HepG2 (cell line): ENCODE measurements at regions of chr20 and their contacts with region 1.

Region 1: GRCh38 chr20:35092524-35093266 is at the start of gene TRPC4AP:
- DNase-seq: peak; percentile 92
- ATAC-seq: peak; percentile 92
- H3K4me3 ChIP-seq: peak within 1 kb of the TSS; percentile 82 to 99 (median 82)
- H3K27ac ChIP-seq: peak within 1 kb of the TSS; percentile 82
- H3K4me1 ChIP-seq: peaks cover 61% of the 10 kb centered on the region
- H3K27me3 ChIP-seq: peaks cover 0 to 4% of the 10 kb centered on the region in 2 experiments; a peak in 1 of 5 replicates
- CTCF ChIP-seq: peak; percentile 99
- EP300 ChIP-seq: peak in 1 of 2 experiments; percentile 66; a peak in 3 of 4 replicates
- POLR2A ChIP-seq: peak; percentile 82 to 85
- RAD21 ChIP-seq: peak; percentile 77
- total RNA-seq, gene TRPC4AP: 136 and 161 TPM in 2 replicates

Region 2: GRCh38 chr20:35008411-35009342 is 84.0 kb before region 1 on chr20:
- CTCF ChIA-PET with region 1: no interaction called
- POLR2A ChIA-PET with region 1: no interaction called
- in situ Hi-C with region 1: no loop called
- intact Hi-C with region 1: no loop called
- DNase-seq: no peak
- ATAC-seq: no peak
- H3K4me3 ChIP-seq: no peak overlapping the region
- H3K27ac ChIP-seq: no peak overlapping the region
- H3K4me1 ChIP-seq: no peaks in the 10 kb centered on the region
- H3K27me3 ChIP-seq: no peaks in the 10 kb centered on the region
- CTCF ChIP-seq: no peak
- EP300 ChIP-seq: no peak
- POLR2A ChIP-seq: no peak
- RAD21 ChIP-seq: no peak

Region 3: GRCh38 chr20:35207950-35208611 is 115.4 kb after region 1 on chr20:
- CTCF ChIA-PET with region 1: interaction called, 58 read pairs
- POLR2A ChIA-PET with region 1: interaction called, 5 read pairs
- in situ Hi-C with region 1: no loop called
- intact Hi-C with region 1: loop called (anchors 1 kb)
- DNase-seq: peak; percentile 89
- ATAC-seq: peak; percentile 98
- H3K4me3 ChIP-seq: peak overlapping the region in 2 of 3 experiments; percentile 23 to 40; a peak in 4 of 6 replicates
- H3K27ac ChIP-seq: peak overlapping the region; percentile 46
- H3K4me1 ChIP-seq: peaks cover 18% of the 10 kb centered on the region
- H3K27me3 ChIP-seq: no peaks in the 10 kb centered on the region
- CTCF ChIP-seq: peak; percentile 97
- EP300 ChIP-seq: peak in 1 of 2 experiments; percentile 58; a peak in 1 of 4 replicates
- POLR2A ChIP-seq: no peak
- RAD21 ChIP-seq: peak; percentile 97

Region 4: GRCh38 chr20:35284267-35284991 is 191.7 kb after region 1 on chr20 and contains the start of gene EIF6:
- CTCF ChIA-PET with region 1: no interaction called
- POLR2A ChIA-PET with region 1: interaction called, 17 read pairs
- in situ Hi-C with region 1: no loop called
- intact Hi-C with region 1: no loop called
- DNase-seq: peak; percentile 99
- ATAC-seq: peak; percentile 76
- H3K4me3 ChIP-seq: peak within 1 kb of the TSS; percentile 80 to 98 (median 81)
- H3K27ac ChIP-seq: peak within 1 kb of the TSS; percentile 95
- H3K4me1 ChIP-seq: peaks cover 74% of the 10 kb centered on the region
- H3K27me3 ChIP-seq: peaks cover 0 to 2% of the 10 kb centered on the region in 2 experiments; a peak in 2 of 5 replicates
- CTCF ChIP-seq: peak; percentile 19; the same call in 1 of the 2 replicates
- EP300 ChIP-seq: peak; percentile 43 to 59; a peak in 3 of 4 replicates
- POLR2A ChIP-seq: peak; percentile 94 to 96
- RAD21 ChIP-seq: peak; percentile 44
- total RNA-seq, gene EIF6: 462 and 603 TPM in 2 replicates

Region 5: GRCh38 chr20:35447082-35447789 is 354.5 kb after region 1 on chr20:
- CTCF ChIA-PET with region 1: no interaction called
- POLR2A ChIA-PET with region 1: no interaction called
- in situ Hi-C with region 1: no loop called
- intact Hi-C with region 1: loop called (anchors 10 kb)
- DNase-seq: peak; percentile 92
- ATAC-seq: peak; percentile 90
- H3K4me3 ChIP-seq: peak overlapping the region; percentile 51 to 61 (median 55)
- H3K27ac ChIP-seq: no peak overlapping the region
- H3K4me1 ChIP-seq: peaks cover 8% of the 10 kb centered on the region
- H3K27me3 ChIP-seq: no peaks in the 10 kb centered on the region; a peak in 2 of 5 replicates
- CTCF ChIP-seq: peak; percentile 95
- EP300 ChIP-seq: no peak
- POLR2A ChIP-seq: peak in 1 of 2 experiments; percentile 48; a peak in 2 of 4 replicates
- RAD21 ChIP-seq: peak; percentile 75